SK-N-SH (cell line): ENCODE measurements at regions of chr1 and their contacts with region 1.

Region 1: DNA sequence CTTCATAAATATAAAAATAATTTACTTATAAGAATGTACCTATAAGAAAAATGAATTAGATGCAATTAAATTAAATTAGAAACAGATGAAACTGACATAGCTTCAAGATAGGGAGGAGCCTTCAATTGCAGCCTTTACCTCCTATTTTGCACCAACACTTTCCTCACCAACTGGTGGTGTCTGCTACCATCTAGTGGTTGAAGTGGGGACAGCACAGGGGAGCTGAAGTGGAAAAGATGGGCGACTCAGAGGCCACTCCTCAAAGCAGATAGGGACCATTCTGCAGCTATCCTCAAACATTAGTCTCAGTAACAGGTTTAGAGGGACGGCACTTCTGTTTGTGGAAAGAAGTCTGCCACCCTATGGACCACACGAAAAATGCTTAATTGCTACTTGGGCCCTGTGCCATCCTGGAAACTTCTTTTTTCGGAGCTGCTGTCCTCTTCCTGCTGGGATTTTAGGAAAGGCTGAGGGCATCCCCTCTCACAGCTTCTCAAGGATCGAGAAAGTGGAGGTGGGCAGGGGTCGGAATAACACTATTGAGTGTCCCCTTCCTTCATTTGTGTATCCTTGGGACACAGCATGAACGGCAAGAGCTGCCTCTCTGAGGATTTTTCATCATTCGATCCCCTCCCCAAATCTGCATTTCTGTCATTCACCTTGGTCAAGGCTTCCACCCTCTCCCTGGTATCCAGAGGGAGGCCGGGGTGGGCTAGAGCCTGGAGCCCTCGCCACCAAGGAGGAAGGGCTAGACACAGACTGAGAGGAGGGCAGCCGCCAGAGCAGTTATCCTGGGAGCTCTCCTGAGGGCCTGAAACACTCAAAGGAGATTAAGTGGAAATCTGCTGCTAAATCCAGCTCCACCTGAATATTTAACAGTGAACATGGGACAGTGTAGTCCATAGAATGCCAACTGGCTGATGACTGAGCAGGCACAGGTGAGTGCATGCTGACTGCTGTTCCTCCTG is 9.6 kb downstream of the PROK1 start:
- DNase-seq: peak; percentile 83
- H3K4me3 ChIP-seq: peak overlapping the region in 1 of 2 experiments; percentile 26; a peak in 1 of 4 replicates
- H3K27ac ChIP-seq: no peak overlapping the region
- H3K4me1 ChIP-seq: 0 out of 4 replicates have a peak, but pooled peaks cover 0 to 6% of the 10 kb centered on the region in 2 experiments
- H3K27me3 ChIP-seq: no peaks in the 10 kb centered on the region
- CTCF ChIP-seq: peak; percentile 94
- EP300 ChIP-seq: no peak
- RAD21 ChIP-seq: peak; percentile 99

Region 2: GRCh38 chr1:110196917-110197765 is 263.4 kb before region 1 on chr1:
- CTCF ChIA-PET with region 1: interaction called, 125 read pairs
- POLR2A ChIA-PET with region 1: no interaction called
- DNase-seq: peak; percentile 89
- H3K4me3 ChIP-seq: peak overlapping the region in 1 of 2 experiments; percentile 11; a peak in 1 of 4 replicates
- H3K27ac ChIP-seq: no peak overlapping the region; a peak in 1 of 4 replicates
- H3K4me1 ChIP-seq: peaks cover 0 to 20% of the 10 kb centered on the region in 2 experiments; a peak in 1 of 4 replicates
- H3K27me3 ChIP-seq: no peaks in the 10 kb centered on the region
- CTCF ChIP-seq: peak; percentile 90
- EP300 ChIP-seq: no peak
- RAD21 ChIP-seq: peak; percentile 68

Region 3: DNA sequence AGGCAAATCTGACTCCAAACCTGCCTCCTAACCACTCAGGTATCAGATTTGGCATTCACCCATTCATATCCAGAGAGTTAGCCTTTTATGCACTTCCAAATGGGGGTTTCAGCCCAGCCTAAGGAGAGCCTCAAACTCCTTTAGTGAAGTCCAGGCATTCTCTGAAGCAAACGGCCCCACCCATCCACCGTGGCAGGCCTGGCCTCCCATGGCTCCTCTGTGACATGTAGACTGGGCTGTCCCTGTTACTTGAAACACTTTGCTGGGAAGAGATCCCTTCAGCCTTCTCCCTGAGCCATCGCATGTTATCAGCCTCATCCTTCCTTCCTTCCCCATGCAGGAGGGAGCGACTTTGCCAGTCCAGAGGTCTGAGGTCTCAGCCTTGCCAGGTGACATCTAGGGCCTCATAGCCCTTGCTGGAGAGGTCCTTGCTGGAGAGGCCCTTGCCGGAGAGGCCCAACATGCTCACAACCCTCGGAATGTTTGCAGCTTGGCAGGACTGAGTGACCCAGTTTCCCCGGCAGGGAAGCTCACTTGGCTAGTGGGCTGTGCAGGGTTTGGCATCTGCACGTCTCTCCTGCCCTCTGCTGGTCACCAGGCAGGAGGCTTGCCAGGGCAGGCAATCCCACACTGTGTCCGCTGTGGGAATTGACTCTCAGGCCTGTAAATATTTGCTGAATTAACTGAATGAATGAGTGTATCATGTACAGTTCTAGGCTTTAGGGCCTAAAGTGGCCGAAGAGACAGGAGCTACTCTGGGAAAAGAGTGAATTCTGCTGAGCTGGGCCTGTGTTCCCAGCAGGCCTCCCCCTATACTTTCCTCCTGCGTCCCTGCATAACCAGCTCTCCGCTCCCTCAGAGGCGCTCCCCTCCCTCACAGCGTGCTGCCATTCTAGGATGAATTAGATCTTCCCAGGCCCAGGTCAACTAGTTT is 148.1 kb before region 1 on chr1:
- CTCF ChIA-PET with region 1: interaction called, 33 read pairs
- POLR2A ChIA-PET with region 1: no interaction called
- DNase-seq: peak; percentile 77
- H3K4me3 ChIP-seq: peak overlapping the region in 1 of 2 experiments; percentile 49; a peak in 1 of 4 replicates
- H3K27ac ChIP-seq: no peak overlapping the region
- H3K4me1 ChIP-seq: peaks cover 0 to 4% of the 10 kb centered on the region in 2 experiments; a peak in 1 of 4 replicates
- H3K27me3 ChIP-seq: no peaks in the 10 kb centered on the region; the same call in 1 of the 2 replicates
- CTCF ChIP-seq: peak; percentile 94
- EP300 ChIP-seq: no peak
- RAD21 ChIP-seq: peak; percentile 100

Region 4: DNA sequence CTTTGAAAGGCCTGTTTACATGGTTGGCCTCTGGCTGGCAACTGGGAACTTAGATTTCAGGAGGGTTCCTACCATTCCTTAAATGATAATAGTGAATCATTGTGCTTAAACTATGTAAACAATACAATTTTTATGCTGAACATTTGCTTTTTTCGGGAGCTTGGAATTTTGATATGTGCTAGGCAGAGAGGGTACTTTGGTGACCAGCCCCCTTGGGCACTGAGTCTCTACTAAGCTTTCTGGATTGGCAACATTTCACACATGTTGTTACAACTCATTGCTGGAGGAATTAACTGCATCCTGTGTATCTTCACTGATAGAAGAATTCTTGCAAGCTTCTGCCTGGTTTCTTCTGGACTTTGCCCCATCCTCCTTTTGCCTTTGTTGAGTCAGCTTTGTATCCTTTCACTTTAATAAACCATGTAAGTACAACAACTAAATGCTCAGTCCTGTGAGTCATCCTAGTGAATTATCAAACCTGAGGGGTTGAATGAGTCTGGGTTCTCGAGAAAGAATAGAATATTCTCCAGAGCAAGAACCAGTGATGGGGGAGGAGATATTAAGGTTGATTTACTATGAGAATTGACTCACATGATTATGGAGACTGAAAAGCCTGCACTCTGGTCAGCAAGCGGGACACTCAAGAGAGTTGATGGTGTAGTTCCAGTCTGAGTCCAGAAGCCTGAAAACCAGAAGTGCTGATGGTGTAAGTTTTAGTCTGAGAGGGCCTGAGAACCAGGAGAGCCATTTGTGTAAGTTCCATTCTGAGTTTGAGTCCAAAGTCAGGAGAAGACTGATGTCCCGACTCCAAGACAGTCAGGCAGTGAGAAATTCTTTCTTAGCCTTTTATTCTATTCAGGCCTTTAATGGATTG is 66.6 kb before region 1 on chr1:
- CTCF ChIA-PET with region 1: interaction called, 10 read pairs
- POLR2A ChIA-PET with region 1: no interaction called
- DNase-seq: no peak
- H3K4me3 ChIP-seq: no peak overlapping the region
- H3K27ac ChIP-seq: peak overlapping the region in 1 of 2 experiments; percentile 45; a peak in 2 of 4 replicates
- H3K4me1 ChIP-seq: peaks cover 5 to 6% of the 10 kb centered on the region in 2 experiments; a peak in 1 of 4 replicates
- H3K27me3 ChIP-seq: no peaks in the 10 kb centered on the region
- CTCF ChIP-seq: no peak
- EP300 ChIP-seq: no peak
- RAD21 ChIP-seq: no peak

Region 5: GRCh38 chr1:110433803-110434202 is 26.7 kb before region 1 on chr1:
- CTCF ChIA-PET with region 1: interaction called, 24 read pairs
- POLR2A ChIA-PET with region 1: interaction called, 4 read pairs
- DNase-seq: no peak
- H3K4me3 ChIP-seq: no peak overlapping the region
- H3K27ac ChIP-seq: no peak overlapping the region
- H3K4me1 ChIP-seq: no peaks in the 10 kb centered on the region; a peak in 1 of 4 replicates
- H3K27me3 ChIP-seq: peaks cover 35% of the 10 kb centered on the region
- CTCF ChIP-seq: no peak
- EP300 ChIP-seq: no peak
- RAD21 ChIP-seq: no peak

Region 6: DNA sequence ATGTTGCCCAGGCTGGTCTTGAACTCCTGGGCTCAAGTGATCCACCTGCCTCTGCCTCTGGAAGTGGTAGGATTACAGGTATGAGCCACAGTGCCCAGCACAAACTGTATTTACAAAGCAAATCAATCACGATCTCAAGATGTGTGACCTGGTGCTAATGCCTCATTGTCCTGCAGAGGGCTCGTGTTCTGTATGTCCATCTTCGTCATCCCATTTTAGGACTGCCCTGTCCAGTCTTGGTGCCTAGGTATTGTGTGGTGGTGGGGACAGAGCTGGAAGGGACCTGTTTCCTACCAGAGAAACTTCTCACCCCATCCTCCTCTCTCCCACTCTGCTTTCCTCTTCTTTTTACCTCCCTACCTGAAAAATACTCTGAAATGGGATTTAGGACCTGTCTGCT is 10.6 kb after region 1 on chr1:
- CTCF ChIA-PET with region 1: interaction called, 17 read pairs
- POLR2A ChIA-PET with region 1: no interaction called
- DNase-seq: no peak
- H3K4me3 ChIP-seq: no peak overlapping the region
- H3K27ac ChIP-seq: no peak overlapping the region
- H3K4me1 ChIP-seq: peaks cover 0 to 2% of the 10 kb centered on the region in 2 experiments; a peak in 1 of 4 replicates
- H3K27me3 ChIP-seq: no peaks in the 10 kb centered on the region
- CTCF ChIP-seq: no peak
- EP300 ChIP-seq: no peak
- RAD21 ChIP-seq: no peak